ENCODE measurements at regions of chr17 and their contacts with region 1.

Region 1: GRCh38 chr17:12365805-12366204 is 299.9 kb upstream of the MYOCD start:
- DNase-seq: peak; percentile 90
- H3K4me3 ChIP-seq: no peak overlapping the region
- H3K27ac ChIP-seq: peak overlapping the region; percentile 73 to 82 (median 76)
- H3K4me1 ChIP-seq: peaks cover 0 to 48% (median 32%) of the 10 kb centered on the region in 4 donors
- H3K27me3 ChIP-seq: no peaks in the 10 kb centered on the region
- CTCF ChIP-seq: no peak
- EP300 ChIP-seq: peak; percentile 45
- POLR2A ChIP-seq: no peak

Region 2: GRCh38 chr17:12415031-12415430 is 49.2 kb after region 1 on chr17:
- intact Hi-C with region 1: loop called (anchors 10 kb)
- DNase-seq: no peak
- H3K4me3 ChIP-seq: no peak overlapping the region
- H3K27ac ChIP-seq: peak overlapping the region; percentile 66 to 81 (median 79)
- H3K4me1 ChIP-seq: peaks cover 0 to 54% (median 31%) of the 10 kb centered on the region in 4 donors
- H3K27me3 ChIP-seq: no peaks in the 10 kb centered on the region
- CTCF ChIP-seq: no peak
- EP300 ChIP-seq: no peak
- POLR2A ChIP-seq: no peak

Region 3: GRCh38 chr17:12463102-12463501 is 97.3 kb after region 1 on chr17:
- intact Hi-C with region 1: loop called (anchors 10 kb)
- DNase-seq: no peak
- H3K4me3 ChIP-seq: no peak overlapping the region
- H3K27ac ChIP-seq: peak overlapping the region; percentile 65 to 82 (median 72)
- H3K4me1 ChIP-seq: peaks cover 0 to 64% (median 36%) of the 10 kb centered on the region in 4 donors
- H3K27me3 ChIP-seq: no peaks in the 10 kb centered on the region
- CTCF ChIP-seq: no peak
- EP300 ChIP-seq: no peak
- POLR2A ChIP-seq: no peak

Region 4: DNA sequence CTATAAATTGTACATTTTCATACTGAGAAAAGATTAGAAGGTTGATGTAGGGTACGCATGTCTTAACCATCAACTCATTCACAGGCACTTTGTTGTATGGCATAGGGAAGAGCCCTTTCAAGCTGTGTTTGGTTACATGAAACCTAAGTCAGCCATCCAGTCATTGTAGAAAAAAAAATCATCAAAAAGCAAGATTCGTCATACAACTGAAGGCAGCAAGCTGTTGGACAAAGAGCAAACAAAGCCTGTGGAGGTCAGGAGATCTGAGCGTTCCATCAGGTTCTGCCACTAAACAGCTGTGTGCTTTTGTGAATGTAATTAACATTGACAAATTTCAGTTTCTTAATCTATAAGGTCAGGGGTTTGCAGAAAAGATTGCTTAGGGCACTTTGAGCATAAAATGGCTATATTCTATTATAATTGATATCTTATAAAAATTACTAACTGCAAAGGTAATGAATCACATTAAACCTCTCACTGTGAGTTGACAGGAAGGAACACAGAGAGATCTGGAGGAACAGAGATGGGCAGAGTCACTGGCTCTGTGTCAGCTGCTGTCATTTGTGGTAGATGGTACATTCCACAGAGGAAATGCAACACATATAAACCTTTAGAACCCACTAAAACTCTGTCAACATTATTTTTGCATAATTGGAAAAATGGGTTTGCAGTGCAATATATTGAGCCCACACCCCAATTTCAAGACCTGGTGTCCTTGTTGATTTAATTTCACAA is 233.5 kb after region 1 on chr17:
- intact Hi-C with region 1: no loop called
- DNase-seq: no peak
- H3K4me3 ChIP-seq: no peak overlapping the region
- H3K27ac ChIP-seq: no peak overlapping the region
- H3K4me1 ChIP-seq: no peaks in the 10 kb centered on the region
- H3K27me3 ChIP-seq: no peaks in the 10 kb centered on the region
- CTCF ChIP-seq: no peak
- EP300 ChIP-seq: no peak
- POLR2A ChIP-seq: no peak